Right lobe of liver (tissue), 6 donors: ENCODE measurements at regions of chr1 and their contacts with region 1.

Region 1: GRCh38 chr1:47409311-47410070 is 6.6 kb upstream of the FOXE3 start:
- DNase-seq: no peak
- ATAC-seq: no peak
- H3K4me3 ChIP-seq: no peak overlapping the region
- H3K27ac ChIP-seq: no peak overlapping the region
- H3K4me1 ChIP-seq: no peaks in the 10 kb centered on the region
- H3K27me3 ChIP-seq: no peaks in the 10 kb centered on the region
- CTCF ChIP-seq: no peak
- POLR2A ChIP-seq: no peak

Region 2: GRCh38 chr1:47189844-47190508 is 219.5 kb before region 1 on chr1 and contains the start of gene PDZK1IP1:
- intact Hi-C with region 1: loop called in 1 of 2 experiments (anchors 10 kb)
- DNase-seq: peak in 2 of 3 donors; percentile 57 to 74
- ATAC-seq: peak; percentile 5 to 58 (median 54)
- H3K4me3 ChIP-seq: no peak within 1 kb of the TSS
- H3K27ac ChIP-seq: no peak within 1 kb of the TSS
- H3K4me1 ChIP-seq: peaks cover 0 to 21% (median 0%) of the 10 kb centered on the region in 4 donors
- H3K27me3 ChIP-seq: no peaks in the 10 kb centered on the region
- CTCF ChIP-seq: no peak
- POLR2A ChIP-seq: no peak
- total RNA-seq, gene PDZK1IP1: 0.24 to 44.3 (median 5.4) TPM

Region 3: GRCh38 chr1:47302472-47302871 is 107.0 kb before region 1 on chr1:
- intact Hi-C with region 1: no loop called
- DNase-seq: no peak
- ATAC-seq: no peak
- H3K4me3 ChIP-seq: no peak overlapping the region
- H3K27ac ChIP-seq: no peak overlapping the region
- H3K4me1 ChIP-seq: no peaks in the 10 kb centered on the region
- H3K27me3 ChIP-seq: no peaks in the 10 kb centered on the region
- CTCF ChIP-seq: no peak
- POLR2A ChIP-seq: no peak

Region 4: DNA sequence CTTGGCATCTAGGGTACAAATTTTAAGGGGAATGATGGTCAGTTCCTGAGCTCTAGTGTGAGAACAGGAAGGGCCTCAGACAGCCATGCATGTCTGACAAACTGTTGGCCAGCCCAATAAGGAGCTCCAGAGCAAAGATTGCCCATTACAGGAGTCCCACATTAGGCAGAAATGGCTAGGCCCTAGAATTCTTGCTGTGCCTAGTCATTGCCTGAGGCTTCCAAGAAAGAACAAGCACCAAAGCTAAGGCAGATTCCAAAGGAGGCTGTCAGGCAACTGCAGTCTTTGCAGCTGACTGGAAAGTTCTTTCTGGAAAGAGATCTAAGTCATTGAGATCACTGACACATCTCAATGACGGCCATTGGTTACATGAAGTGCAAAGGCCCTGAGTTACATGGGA is 91.7 kb before region 1 on chr1:
- intact Hi-C with region 1: no loop called
- DNase-seq: no peak
- ATAC-seq: no peak
- H3K4me3 ChIP-seq: no peak overlapping the region
- H3K27ac ChIP-seq: no peak overlapping the region
- H3K4me1 ChIP-seq: peaks cover 0 to 8% (median 3%) of the 10 kb centered on the region in 4 donors
- H3K27me3 ChIP-seq: no peaks in the 10 kb centered on the region
- CTCF ChIP-seq: no peak
- POLR2A ChIP-seq: no peak

Region 5: DNA sequence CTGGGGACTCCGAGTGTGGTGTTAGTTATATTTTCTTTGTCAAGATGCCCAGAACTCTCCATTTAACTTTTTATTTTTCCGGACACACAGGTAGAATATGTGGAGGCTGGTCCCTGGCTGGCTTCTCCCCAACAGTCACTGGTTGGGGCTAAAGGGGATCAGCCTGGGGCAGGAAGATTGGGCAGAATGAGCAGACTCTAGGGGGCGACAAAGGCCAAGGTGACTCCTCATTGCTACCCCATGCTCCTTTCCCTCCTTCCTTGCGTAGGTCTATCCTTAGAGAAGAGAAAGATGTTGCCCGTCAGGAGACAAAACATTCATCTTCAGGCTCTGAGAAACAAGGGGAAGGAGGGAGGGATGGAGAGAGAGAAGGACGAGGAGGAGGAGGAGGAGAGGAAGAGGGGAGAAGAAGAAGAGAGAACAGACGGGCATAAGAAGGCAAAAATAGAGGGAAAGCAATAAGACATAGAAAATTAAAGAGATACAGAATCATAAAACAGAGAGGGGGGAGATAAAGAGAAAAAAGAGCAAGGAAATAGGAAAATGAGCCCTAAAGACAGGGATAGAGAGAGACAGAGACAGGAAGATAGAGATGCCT is 118.3 kb after region 1 on chr1:
- intact Hi-C with region 1: no loop called
- DNase-seq: peak in 2 of 3 donors; percentile 42 to 63
- ATAC-seq: peak; percentile 63 to 81 (median 70)
- H3K4me3 ChIP-seq: no peak overlapping the region
- H3K27ac ChIP-seq: no peak overlapping the region
- H3K4me1 ChIP-seq: peaks cover 0 to 23% (median 6%) of the 10 kb centered on the region in 4 donors
- H3K27me3 ChIP-seq: no peaks in the 10 kb centered on the region
- CTCF ChIP-seq: peak; percentile 64 to 69 (median 66)
- POLR2A ChIP-seq: no peak